ENCODE measurements at regions of chr20 and their contacts with region 1.

Region 1: GRCh38 chr20:34922654-34923424 is 32.8 kb downstream of the GSS start:
- DNase-seq: peak; percentile 95
- ATAC-seq: peak; percentile 87
- H3K4me3 ChIP-seq: 0 out of 2 replicates have a peak overlapping the region, but pooled peaks have one; percentile 0
- H3K27ac ChIP-seq: peak overlapping the region; percentile 50
- H3K4me1 ChIP-seq: peaks cover 45% of the 10 kb centered on the region
- H3K27me3 ChIP-seq: no peaks in the 10 kb centered on the region
- CTCF ChIP-seq: no peak

Region 2: GRCh38 chr20:34663213-34663943 is 259.5 kb before region 1 on chr20:
- CTCF ChIA-PET with region 1: no interaction called
- POLR2A ChIA-PET with region 1: no interaction called
- intact Hi-C with region 1: no loop called
- DNase-seq: no peak
- ATAC-seq: no peak
- H3K4me3 ChIP-seq: no peak overlapping the region
- H3K27ac ChIP-seq: no peak overlapping the region
- H3K4me1 ChIP-seq: peaks cover 11% of the 10 kb centered on the region
- H3K27me3 ChIP-seq: no peaks in the 10 kb centered on the region
- CTCF ChIP-seq: no peak

Region 3: DNA sequence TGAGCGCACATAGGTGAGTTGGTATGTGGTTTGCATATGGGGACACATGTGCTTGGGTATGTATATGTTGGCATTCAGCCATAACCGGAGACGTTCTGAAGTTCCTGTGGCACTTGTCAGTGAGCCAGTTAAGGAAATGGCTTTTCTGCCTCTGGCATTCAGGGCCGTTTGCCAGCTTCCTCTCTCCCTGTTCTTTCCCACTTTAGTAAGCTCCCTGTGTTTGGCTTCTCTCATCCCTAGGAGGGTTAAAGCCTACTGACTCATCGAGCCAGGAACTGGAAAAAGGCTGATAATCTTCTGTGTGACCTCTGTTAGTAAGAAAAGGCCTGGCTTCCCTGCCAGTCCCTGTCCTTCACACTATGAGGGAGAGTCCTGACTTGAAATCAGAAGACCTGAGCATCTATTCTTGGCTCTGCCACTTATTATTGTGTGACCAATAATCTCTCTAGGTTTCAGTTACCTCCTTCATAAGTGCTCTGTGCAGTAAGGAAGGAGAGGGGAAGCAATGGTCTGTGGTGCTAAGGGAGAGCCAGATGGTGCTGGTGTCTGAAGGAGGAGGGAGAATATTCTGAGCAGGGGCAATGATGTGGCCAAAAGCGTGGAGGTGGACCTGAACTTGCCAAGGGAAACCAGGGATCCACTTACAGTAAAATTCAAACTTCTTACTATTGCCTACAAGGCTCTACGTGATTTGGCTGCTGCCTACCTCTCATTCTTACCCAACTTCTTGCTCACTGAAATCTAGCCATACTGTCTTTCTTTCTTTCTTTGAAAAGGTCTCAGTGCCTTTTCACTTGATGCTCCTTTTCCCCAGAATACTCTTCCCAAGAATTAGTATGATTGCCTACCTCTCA is 15.0 kb before region 1 on chr20:
- CTCF ChIA-PET with region 1: no interaction called
- POLR2A ChIA-PET with region 1: no interaction called
- intact Hi-C with region 1: loop called (anchors 1 kb)
- DNase-seq: peak; percentile 100
- ATAC-seq: peak; percentile 99
- H3K4me3 ChIP-seq: no peak overlapping the region
- H3K27ac ChIP-seq: peak overlapping the region; percentile 94
- H3K4me1 ChIP-seq: peaks cover 23% of the 10 kb centered on the region
- H3K27me3 ChIP-seq: no peaks in the 10 kb centered on the region
- CTCF ChIP-seq: no peak

Measured in PC-3 (cell line).